Activated T-helper 2 cell treated with anti-CD3 and anti-CD28 coated beads, Interferon-gamma antibody, Interleukin-2, Interleukin-4, amounts not matched to agents 10 μg/mL and 5 μg/mL and 100 μg/mL, durations not matched to agents 14 hours and 24 hours and 36 hours (primary cell): ENCODE measurements at regions of chr3 and their contacts with region 1.

Region 1: DNA sequence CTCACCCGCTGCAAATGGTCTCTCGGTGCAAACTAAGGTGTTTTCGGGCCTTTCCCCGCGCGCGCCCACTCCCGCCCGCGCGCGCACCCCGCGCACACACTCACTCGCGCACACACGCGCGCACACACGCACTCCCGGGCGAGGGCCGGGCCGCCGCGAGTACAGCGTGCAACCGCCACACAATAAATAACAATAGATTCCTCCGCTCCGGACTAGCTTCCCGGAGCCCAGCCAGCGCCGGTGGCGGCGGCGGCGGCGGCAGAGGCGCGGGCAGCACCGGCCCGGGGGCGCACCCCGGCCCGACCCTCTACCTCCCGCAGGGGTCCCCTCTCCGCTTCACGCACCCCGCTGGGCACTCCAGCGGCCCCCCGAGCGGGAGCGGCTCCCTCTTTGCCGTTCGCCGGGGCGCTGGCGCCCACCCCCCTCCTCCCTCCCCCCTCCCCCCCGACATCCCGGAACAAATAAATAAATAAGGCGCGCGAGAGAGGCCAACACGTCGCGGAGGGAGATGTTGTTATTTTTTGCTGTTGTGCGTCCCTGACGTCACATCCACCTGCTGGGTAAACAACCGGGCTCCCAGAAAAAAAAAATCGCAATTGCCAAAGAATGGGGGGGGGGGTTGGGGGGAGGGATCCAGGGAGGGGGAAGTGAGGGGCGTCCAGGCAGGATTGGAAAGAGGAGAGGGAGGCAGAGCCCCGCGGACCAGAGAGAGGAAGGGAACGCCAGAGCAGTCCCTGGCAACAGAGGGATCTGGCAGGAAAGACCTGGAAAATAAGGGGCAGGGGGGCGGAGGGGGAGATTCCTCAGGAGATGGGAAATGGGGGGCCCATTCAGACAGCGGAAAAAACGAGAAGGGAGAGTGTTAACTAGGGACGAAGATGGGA is at the start of gene FOXP1:
- DNase-seq: peak; percentile 57
- H3K4me3 Mint-ChIP-seq: peak within 1 kb of the TSS; percentile 91
- H3K27ac Mint-ChIP-seq: peak within 1 kb of the TSS; percentile 95
- H3K4me1 Mint-ChIP-seq: peaks cover 52% of the 10 kb centered on the region
- H3K27me3 Mint-ChIP-seq: no peaks in the 10 kb centered on the region
- total RNA-seq, gene FOXP1: 132 and 138 TPM in 2 replicates

Region 2: GRCh38 chr3:71006810-71007785 is 576.7 kb before region 1 on chr3:
- intact Hi-C with region 1: loop called (anchors 2 kb)
- DNase-seq: no peak
- H3K4me3 Mint-ChIP-seq: no peak overlapping the region
- H3K27ac Mint-ChIP-seq: no peak overlapping the region
- H3K4me1 Mint-ChIP-seq: peaks cover 59% of the 10 kb centered on the region
- H3K27me3 Mint-ChIP-seq: no peaks in the 10 kb centered on the region

Region 3: GRCh38 chr3:71130471-71131374 is 453.1 kb before region 1 on chr3:
- intact Hi-C with region 1: loop called (anchors 2 kb)
- DNase-seq: peak; percentile 66
- H3K4me3 Mint-ChIP-seq: peak overlapping the region; percentile 91
- H3K27ac Mint-ChIP-seq: peak overlapping the region; percentile 94
- H3K4me1 Mint-ChIP-seq: peaks cover 62% of the 10 kb centered on the region
- H3K27me3 Mint-ChIP-seq: no peaks in the 10 kb centered on the region

Region 4: GRCh38 chr3:71360764-71361163 is 223.0 kb before region 1 on chr3:
- intact Hi-C with region 1: loop called (anchors 2 kb)
- DNase-seq: no peak
- H3K4me3 Mint-ChIP-seq: peak overlapping the region; percentile 52
- H3K27ac Mint-ChIP-seq: peak overlapping the region; percentile 96
- H3K4me1 Mint-ChIP-seq: peaks cover 79% of the 10 kb centered on the region
- H3K27me3 Mint-ChIP-seq: no peaks in the 10 kb centered on the region

Region 5: DNA sequence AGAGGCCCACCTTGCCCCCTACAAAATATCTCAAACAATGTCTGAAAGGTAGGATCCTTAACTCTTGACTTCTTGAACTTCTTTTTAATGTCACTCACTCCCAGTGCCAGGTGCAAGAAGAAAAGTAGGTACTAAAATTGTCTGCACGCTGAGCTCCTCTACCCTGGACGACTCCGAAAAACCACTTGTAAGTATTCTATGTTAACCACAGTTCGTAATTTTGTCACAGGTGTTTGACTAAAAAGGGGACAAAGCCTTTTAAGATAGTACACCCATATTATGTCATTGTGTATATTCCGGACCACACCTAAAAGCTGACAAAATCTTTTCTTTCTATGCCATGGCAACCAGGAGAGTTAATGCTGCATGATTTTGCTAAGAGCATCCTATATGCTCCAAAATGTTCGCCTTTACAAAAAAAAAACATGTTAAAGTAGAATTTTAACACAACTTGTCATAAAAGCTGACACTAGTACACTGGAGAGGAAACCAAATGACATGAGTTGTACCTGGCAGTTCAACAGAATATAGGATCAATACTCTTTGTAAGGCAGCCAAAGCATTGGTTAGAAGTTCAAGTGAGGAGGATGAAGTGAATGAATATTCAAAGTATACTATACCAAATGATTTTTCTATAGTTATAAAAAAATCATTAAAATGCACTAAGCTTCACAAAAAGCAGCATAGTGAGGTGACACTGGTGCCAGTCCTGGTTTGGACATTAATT is 210.7 kb before region 1 on chr3:
- intact Hi-C with region 1: no loop called
- DNase-seq: no peak
- H3K4me3 Mint-ChIP-seq: no peak overlapping the region
- H3K27ac Mint-ChIP-seq: no peak overlapping the region
- H3K4me1 Mint-ChIP-seq: peaks cover 24% of the 10 kb centered on the region
- H3K27me3 Mint-ChIP-seq: peaks cover 4% of the 10 kb centered on the region

Region 6: GRCh38 chr3:71456156-71456555 is 127.7 kb before region 1 on chr3:
- intact Hi-C with region 1: loop called (anchors 2 kb)
- DNase-seq: no peak
- H3K4me3 Mint-ChIP-seq: peak overlapping the region; percentile 70
- H3K27ac Mint-ChIP-seq: peak overlapping the region; percentile 89
- H3K4me1 Mint-ChIP-seq: peaks cover 85% of the 10 kb centered on the region
- H3K27me3 Mint-ChIP-seq: no peaks in the 10 kb centered on the region

Region 7: GRCh38 chr3:71725279-71725991 is 141.6 kb after region 1 on chr3 and contains the start of gene EIF4E3:
- intact Hi-C with region 1: loop called (anchors 5 kb)
- DNase-seq: peak; percentile 28
- H3K4me3 Mint-ChIP-seq: peak within 1 kb of the TSS; percentile 88
- H3K27ac Mint-ChIP-seq: peak within 1 kb of the TSS; percentile 89
- H3K4me1 Mint-ChIP-seq: peaks cover 63% of the 10 kb centered on the region
- H3K27me3 Mint-ChIP-seq: peaks cover 2% of the 10 kb centered on the region
- total RNA-seq, gene EIF4E3: 17.3 and 17.9 TPM in 2 replicates